Testis (tissue), 5 donors: ENCODE measurements at regions of chr11 and their contacts with region 1.

Region 1: DNA sequence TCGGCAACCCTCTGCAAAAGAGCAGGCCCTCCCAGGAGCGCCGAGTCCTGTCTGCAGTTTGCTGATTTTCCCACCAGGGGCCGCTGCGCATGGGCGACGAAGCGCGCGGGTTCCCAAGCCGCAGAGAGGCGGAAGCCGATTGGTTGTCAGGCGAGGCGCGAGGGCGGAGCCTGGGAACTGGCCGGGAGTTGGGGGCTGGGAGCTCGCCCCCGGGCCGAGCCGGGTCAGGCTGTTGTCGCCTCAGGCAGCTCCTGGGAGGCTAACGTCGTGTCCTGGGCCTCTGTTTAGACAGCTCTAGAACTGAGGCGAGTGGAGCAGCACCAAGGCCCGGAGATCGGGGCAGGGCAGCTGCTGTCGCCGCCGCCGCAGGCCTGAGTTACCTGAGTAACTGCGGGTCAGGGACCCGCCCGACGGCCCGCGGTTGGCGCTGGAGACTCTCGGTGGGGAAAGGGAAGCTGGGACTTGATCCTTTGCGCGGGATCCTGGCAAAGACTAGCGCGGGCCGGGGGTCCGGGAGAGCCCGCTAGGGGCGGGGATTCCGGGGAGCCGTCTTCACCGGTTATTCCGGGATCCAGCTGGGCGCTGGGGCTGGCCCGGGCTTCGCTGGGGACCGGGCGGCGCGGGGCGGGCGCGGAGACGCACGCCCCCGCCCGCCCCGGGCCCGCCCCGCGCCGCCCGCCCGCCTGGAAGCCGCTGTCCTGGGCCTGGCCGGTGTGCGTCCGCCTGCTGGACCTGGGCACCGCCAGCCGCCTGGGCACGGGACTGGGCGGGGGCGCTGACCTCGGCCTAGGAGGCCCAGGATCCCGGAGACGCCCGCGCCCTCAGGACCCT is at the start of gene STIM1:
- DNase-seq: peak; percentile 96
- H3K4me3 ChIP-seq: peak within 1 kb of the TSS; percentile 79 to 83
- H3K27ac ChIP-seq: peak within 1 kb of the TSS; percentile 88 to 96
- H3K4me1 ChIP-seq: peaks cover 42% of the 10 kb centered on the region
- H3K27me3 ChIP-seq: no peaks in the 10 kb centered on the region
- CTCF ChIP-seq: peak; percentile 94 to 100 (median 99)
- POLR2A ChIP-seq: peak; percentile 20
- total RNA-seq, gene STIM1: 78.2 to 87.1 TPM

Region 2: GRCh38 chr11:3920148-3920852 is 65.1 kb after region 1 on chr11:
- intact Hi-C with region 1: no loop called
- DNase-seq: no peak
- H3K4me3 ChIP-seq: no peak overlapping the region
- H3K27ac ChIP-seq: no peak overlapping the region
- H3K4me1 ChIP-seq: no peaks in the 10 kb centered on the region
- H3K27me3 ChIP-seq: no peaks in the 10 kb centered on the region
- CTCF ChIP-seq: no peak
- POLR2A ChIP-seq: no peak

Region 3: DNA sequence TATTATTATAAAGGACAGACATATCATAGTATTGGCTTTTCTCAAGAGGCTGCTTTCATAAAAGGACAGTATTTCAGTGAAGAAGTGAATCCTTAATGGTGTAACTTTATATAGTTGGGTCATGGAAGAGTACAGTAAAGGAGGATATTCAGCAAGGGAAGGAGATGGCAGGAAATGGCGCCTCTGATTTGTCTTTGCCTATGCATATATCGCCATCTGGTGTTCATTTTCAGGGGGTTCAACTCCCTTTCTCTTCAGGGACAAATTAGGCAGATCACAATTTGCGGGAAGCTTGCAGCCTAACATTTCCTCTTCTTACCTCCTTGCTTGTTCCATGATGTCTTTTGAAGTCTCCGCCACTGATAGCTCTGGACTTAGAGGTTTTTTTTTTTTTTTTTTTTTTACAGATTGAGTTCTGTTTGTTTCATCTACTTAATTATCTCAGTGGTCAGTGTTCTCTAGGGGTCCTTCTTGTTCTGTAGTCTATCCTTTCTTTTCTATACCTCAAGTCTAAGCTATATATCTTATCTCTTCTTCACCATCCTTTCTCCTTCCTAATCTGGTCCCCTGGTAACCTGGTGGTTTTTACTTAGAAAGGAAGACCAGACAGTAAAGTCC is 217.6 kb after region 1 on chr11:
- intact Hi-C with region 1: loop called (anchors 5 kb)
- DNase-seq: peak; percentile 80
- H3K4me3 ChIP-seq: no peak overlapping the region
- H3K27ac ChIP-seq: no peak overlapping the region
- H3K4me1 ChIP-seq: no peaks in the 10 kb centered on the region
- H3K27me3 ChIP-seq: no peaks in the 10 kb centered on the region
- CTCF ChIP-seq: peak; percentile 72 to 96 (median 91)
- POLR2A ChIP-seq: no peak